CD4-positive, alpha-beta memory T cell (primary cell): ENCODE measurements at regions of chr12 and their contacts with region 1.

Region 1: DNA sequence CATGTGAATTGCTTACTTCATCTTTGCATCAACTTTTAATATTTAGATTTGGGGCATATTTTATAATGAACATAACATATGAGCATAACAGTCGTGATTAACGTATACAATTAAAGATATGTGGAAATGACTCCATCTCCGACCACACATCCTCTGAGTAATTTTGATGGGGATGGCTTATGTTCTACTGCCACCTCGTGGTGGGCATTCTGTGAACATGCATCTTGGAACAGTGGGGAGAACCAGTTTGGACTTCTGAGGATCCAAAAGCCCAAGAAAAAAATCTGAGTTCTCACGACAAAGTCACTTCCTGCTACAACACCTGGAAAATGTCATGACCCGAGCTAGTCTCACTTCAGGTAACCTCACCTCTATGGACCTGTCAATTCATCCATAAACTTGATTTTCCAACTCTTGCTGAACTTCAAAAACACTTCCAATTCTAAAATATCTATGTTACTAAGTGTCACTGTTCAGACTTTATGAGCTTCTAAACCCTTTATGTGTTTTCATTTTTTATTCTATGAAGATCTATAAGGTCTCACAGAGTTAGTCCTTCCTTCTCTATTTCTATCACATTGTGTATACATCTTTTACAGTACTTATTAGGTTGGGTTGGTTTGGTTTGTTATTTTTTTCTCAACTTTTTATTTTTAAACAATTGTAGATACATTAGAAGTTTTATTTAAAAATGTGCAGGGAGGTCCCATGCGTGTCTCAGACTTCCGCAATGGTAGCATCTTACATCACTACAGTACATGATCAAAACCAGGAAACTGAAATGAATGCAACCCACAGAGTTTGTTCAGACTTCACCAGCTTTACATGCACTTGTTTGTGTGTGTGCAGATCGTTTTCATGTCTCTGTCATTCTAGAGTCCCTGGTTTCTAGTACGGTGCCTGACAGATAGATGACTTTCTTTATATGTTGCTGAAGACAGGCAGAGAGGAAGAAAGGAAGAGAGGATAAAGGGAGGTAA is 38.2 kb upstream of the STAB2 start:
- DNase-seq: peak; percentile 47 to 62 (median 55)
- H3K4me3 ChIP-seq: no peak overlapping the region
- H3K4me3 Mint-ChIP-seq: no peak overlapping the region
- H3K27ac ChIP-seq: no peak overlapping the region
- H3K27ac Mint-ChIP-seq: peak overlapping the region in 1 of 7 donors; percentile 68
- H3K4me1 ChIP-seq: no peaks in the 10 kb centered on the region
- H3K4me1 Mint-ChIP-seq: peaks cover 0 to 5% (median 0%) of the 10 kb centered on the region in 4 donors
- H3K27me3 ChIP-seq: peaks cover 4% of the 10 kb centered on the region
- H3K27me3 Mint-ChIP-seq: peaks cover 4% of the 10 kb centered on the region in 2 donors

Region 2: GRCh38 chr12:102095675-102096263 is 1453.1 kb before region 1 on chr12:
- CTCF ChIA-PET with region 1: no interaction called
- POLR2A ChIA-PET with region 1: no interaction called
- intact Hi-C with region 1: loop called (anchors 10 kb)
- DNase-seq: peak in 2 of 5 donors; percentile 3 to 6
- H3K4me3 ChIP-seq: no peak overlapping the region
- H3K4me3 Mint-ChIP-seq: no peak overlapping the region
- H3K27ac ChIP-seq: no peak overlapping the region
- H3K27ac Mint-ChIP-seq: peak overlapping the region in 1 of 7 donors; percentile 33
- H3K4me1 ChIP-seq: no peaks in the 10 kb centered on the region
- H3K4me1 Mint-ChIP-seq: peaks cover 0 to 2% (median 0%) of the 10 kb centered on the region in 4 donors
- H3K27me3 ChIP-seq: no peaks in the 10 kb centered on the region
- H3K27me3 Mint-ChIP-seq: no peaks in the 10 kb centered on the region

Region 3: DNA sequence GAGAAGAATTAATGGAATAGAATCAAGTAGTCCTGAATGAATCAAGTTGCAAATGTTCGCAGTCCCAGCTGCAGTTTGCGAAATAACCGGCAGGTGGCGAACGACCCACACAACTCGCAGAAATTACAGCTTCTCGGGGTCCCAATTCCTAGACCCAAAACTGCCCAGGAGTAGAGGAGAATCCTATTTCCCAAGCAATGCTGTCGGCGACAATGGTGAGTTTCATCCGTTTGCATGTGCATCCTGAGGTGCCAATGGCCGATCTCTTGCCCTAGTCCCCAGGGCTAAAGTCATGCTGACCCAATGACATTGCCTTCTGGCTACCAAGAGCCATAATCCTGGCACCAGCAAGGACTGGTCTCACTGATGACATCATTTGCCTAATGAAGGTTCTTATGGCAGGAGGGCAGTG is 600.0 kb before region 1 on chr12:
- CTCF ChIA-PET with region 1: interaction called, 110 read pairs
- POLR2A ChIA-PET with region 1: no interaction called
- intact Hi-C with region 1: loop called (anchors 1 kb)
- DNase-seq: peak in 4 of 5 donors; percentile 19 to 34 (median 21)
- H3K4me3 ChIP-seq: no peak overlapping the region
- H3K4me3 Mint-ChIP-seq: peak overlapping the region in 1 of 8 donors; percentile 13
- H3K27ac ChIP-seq: no peak overlapping the region
- H3K27ac Mint-ChIP-seq: no peak overlapping the region
- H3K4me1 ChIP-seq: no peaks in the 10 kb centered on the region
- H3K4me1 Mint-ChIP-seq: peaks cover 0 to 3% (median 0%) of the 10 kb centered on the region in 4 donors
- H3K27me3 ChIP-seq: peaks cover 5% of the 10 kb centered on the region
- H3K27me3 Mint-ChIP-seq: peaks cover 32 to 37% of the 10 kb centered on the region in 2 donors

Region 4: GRCh38 chr12:103503977-103504376 is 44.9 kb before region 1 on chr12:
- CTCF ChIA-PET with region 1: interaction called, 12 read pairs
- POLR2A ChIA-PET with region 1: no interaction called
- intact Hi-C with region 1: no loop called
- DNase-seq: peak; percentile 46 to 63 (median 57)
- H3K4me3 ChIP-seq: no peak overlapping the region
- H3K4me3 Mint-ChIP-seq: no peak overlapping the region
- H3K27ac ChIP-seq: no peak overlapping the region
- H3K27ac Mint-ChIP-seq: peak overlapping the region in 1 of 7 donors; percentile 38
- H3K4me1 ChIP-seq: no peaks in the 10 kb centered on the region
- H3K4me1 Mint-ChIP-seq: peaks cover 0 to 4% (median 2%) of the 10 kb centered on the region in 4 donors
- H3K27me3 ChIP-seq: no peaks in the 10 kb centered on the region
- H3K27me3 Mint-ChIP-seq: no peaks in the 10 kb centered on the region

Region 5: DNA sequence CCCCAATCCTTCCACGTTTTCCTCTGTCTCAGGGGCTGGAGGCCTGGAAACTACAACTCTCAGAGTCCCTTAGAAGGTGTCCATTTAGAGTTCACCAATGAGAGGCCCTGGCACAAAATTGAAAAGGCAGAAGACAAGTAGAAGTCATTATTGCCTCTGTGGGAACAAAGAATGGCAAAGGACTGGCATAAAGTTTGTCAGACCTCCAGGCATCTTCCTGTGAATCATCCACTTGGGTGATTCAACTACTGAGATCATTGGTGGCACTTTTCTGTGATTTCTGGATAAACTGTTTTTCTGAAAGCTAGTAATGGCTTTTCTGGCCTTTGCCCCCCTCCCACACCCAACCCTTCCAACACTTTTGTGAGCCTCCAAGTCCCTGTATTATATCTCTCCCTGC is 10.5 kb before region 1 on chr12:
- CTCF ChIA-PET with region 1: interaction called, 13 read pairs
- POLR2A ChIA-PET with region 1: no interaction called
- intact Hi-C with region 1: no loop called
- DNase-seq: no peak
- H3K4me3 ChIP-seq: no peak overlapping the region
- H3K4me3 Mint-ChIP-seq: no peak overlapping the region
- H3K27ac ChIP-seq: no peak overlapping the region
- H3K27ac Mint-ChIP-seq: no peak overlapping the region
- H3K4me1 ChIP-seq: no peaks in the 10 kb centered on the region
- H3K4me1 Mint-ChIP-seq: peaks cover 0 to 7% (median 4%) of the 10 kb centered on the region in 4 donors
- H3K27me3 ChIP-seq: no peaks in the 10 kb centered on the region
- H3K27me3 Mint-ChIP-seq: peaks cover 2% of the 10 kb centered on the region in 2 donors

Region 6: DNA sequence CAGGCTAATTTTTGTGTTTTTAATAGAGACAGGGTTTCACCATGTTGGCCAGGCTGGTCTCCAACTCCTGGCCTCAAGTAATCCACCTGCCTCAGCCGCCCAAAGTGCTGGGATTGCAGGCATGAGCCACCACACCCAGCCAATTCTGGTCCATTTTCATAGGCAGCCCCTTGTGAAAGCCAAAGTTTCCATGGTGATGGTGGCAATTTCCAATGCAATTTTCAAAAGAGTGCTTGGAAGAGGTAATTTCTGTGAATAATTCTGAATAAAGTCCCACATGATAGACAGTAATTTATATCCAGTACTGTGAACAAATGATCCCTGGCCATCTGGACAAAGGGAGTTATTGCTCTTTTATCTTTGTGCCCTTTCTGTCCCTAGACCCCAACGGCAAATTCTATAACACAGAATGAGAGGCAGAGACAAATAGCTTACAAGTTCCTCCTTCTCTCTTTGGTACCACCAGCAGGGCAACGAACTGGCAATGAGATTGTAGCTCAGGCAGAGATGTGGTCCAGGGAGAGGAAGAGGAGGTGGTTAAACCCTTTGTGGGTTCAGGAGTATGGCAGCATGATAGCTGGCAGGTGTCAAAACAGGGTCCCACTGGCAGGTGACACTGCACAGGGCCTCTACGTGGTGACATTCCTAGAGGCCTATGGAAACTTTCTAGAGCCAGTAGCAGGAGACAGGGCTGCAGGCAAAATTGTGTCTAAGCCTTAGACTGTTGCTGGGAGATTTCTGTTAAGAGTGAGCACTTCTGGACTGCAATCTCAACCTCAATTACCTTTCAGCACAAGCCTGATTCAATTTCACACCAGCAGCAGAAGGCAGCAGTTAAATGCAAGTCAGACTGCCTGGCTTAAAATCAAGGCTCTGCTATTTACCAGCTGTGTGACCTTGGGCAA is 245.6 kb after region 1 on chr12:
- CTCF ChIA-PET with region 1: no interaction called
- POLR2A ChIA-PET with region 1: no interaction called
- intact Hi-C with region 1: no loop called
- DNase-seq: no peak
- H3K4me3 ChIP-seq: no peak overlapping the region
- H3K4me3 Mint-ChIP-seq: no peak overlapping the region
- H3K27ac ChIP-seq: no peak overlapping the region
- H3K27ac Mint-ChIP-seq: no peak overlapping the region
- H3K4me1 ChIP-seq: no peaks in the 10 kb centered on the region
- H3K4me1 Mint-ChIP-seq: no peaks in the 10 kb centered on the region
- H3K27me3 ChIP-seq: no peaks in the 10 kb centered on the region
- H3K27me3 Mint-ChIP-seq: no peaks in the 10 kb centered on the region